Gastrocnemius medialis (tissue), 4 donors: ENCODE measurements at regions of chr2 and their contacts with region 1.

Region 1: DNA sequence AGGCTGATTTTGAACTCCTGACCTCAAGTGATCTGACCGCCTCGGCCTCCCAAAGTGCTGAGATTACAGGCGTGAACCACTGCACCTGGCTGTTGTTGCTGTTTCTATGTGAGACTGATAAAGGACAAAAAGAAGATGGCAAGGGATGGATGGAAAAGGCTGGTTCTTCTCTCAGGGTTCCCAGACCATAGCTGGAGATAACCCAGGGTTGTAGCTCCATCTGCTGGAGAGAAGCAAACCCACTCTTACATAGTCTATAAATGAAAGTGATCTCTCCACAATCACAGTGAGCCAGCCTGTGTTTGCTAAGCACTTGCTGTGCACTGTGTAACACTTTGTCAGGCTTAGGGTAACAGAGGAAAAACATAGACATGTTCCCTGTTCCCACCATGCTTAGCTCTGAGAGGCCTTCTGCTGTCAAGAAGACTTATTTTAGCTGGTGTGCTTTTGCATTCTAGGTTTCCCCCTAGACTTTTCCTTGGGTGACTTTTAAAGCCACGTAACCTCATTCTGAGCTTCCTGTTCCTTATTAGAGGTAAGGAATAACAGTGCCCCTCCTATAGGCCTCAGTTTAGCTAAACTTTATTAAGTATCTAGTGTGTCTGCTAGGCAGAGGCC is 49.7 kb downstream of the LIMS1 start:
- DNase-seq: peak; percentile 52 to 71
- ATAC-seq: peak; percentile 77 to 85
- H3K4me3 ChIP-seq: no peak overlapping the region
- H3K27ac ChIP-seq: peak overlapping the region; percentile 30 to 79 (median 64)
- H3K4me1 ChIP-seq: peaks cover 56 to 57% of the 10 kb centered on the region in 2 donors
- H3K27me3 ChIP-seq: no peaks in the 10 kb centered on the region
- CTCF ChIP-seq: peak; percentile 70 to 82 (median 78)
- POLR2A ChIP-seq: no peak

Region 2: GRCh38 chr2:107936433-107937359 is 647.3 kb before region 1 on chr2:
- in situ Hi-C with region 1: no loop called
- intact Hi-C with region 1: loop called (anchors 5 kb)
- DNase-seq: no peak
- ATAC-seq: no peak
- H3K4me3 ChIP-seq: no peak overlapping the region
- H3K27ac ChIP-seq: no peak overlapping the region
- H3K4me1 ChIP-seq: no peaks in the 10 kb centered on the region
- H3K27me3 ChIP-seq: no peaks in the 10 kb centered on the region
- CTCF ChIP-seq: peak in 3 of 5 experiments; percentile 8 to 34 (median 31)
- POLR2A ChIP-seq: no peak

Region 3: DNA sequence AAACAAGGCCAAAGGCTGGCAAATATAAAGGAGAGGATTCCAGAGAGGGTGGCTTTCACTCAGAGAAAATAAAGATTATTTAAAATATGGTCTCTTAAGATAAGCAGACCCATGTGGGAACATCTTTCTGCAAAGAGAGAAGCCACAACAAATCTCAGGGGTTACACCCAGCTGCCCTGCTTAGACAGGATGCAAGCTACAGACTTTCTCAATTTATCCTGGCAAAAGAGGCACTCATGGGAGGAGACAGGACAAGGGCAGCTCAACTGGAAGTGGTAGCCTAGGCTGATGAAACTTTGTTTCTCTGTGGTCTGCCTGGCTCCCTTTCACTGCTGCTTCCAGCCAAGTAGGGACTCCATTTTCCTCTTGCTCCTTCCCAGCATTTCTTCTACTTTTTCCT is 232.1 kb before region 1 on chr2:
- in situ Hi-C with region 1: loop called in 1 of 4 experiments (anchors 10 kb)
- intact Hi-C with region 1: loop called (anchors 2 kb)
- DNase-seq: no peak
- ATAC-seq: no peak
- H3K4me3 ChIP-seq: no peak overlapping the region
- H3K27ac ChIP-seq: no peak overlapping the region
- H3K4me1 ChIP-seq: no peaks in the 10 kb centered on the region
- H3K27me3 ChIP-seq: no peaks in the 10 kb centered on the region
- CTCF ChIP-seq: no peak
- POLR2A ChIP-seq: no peak